Tibial artery (tissue), 4 donors: ENCODE measurements at regions of chr2 and their contacts with region 1.

Region 1: GRCh38 chr2:122486086-122486485 is 730.6 kb downstream of the TSN start:
- DNase-seq: no peak
- H3K4me3 ChIP-seq: no peak overlapping the region
- H3K27ac ChIP-seq: no peak overlapping the region
- H3K4me1 ChIP-seq: no peaks in the 10 kb centered on the region
- H3K27me3 ChIP-seq: no peaks in the 10 kb centered on the region
- CTCF ChIP-seq: no peak

Region 2: GRCh38 chr2:122433123-122433754 is 52.8 kb before region 1 on chr2:
- intact Hi-C with region 1: no loop called
- DNase-seq: no peak
- H3K4me3 ChIP-seq: no peak overlapping the region
- H3K27ac ChIP-seq: no peak overlapping the region
- H3K4me1 ChIP-seq: no peaks in the 10 kb centered on the region
- H3K27me3 ChIP-seq: no peaks in the 10 kb centered on the region
- CTCF ChIP-seq: no peak

Region 3: DNA sequence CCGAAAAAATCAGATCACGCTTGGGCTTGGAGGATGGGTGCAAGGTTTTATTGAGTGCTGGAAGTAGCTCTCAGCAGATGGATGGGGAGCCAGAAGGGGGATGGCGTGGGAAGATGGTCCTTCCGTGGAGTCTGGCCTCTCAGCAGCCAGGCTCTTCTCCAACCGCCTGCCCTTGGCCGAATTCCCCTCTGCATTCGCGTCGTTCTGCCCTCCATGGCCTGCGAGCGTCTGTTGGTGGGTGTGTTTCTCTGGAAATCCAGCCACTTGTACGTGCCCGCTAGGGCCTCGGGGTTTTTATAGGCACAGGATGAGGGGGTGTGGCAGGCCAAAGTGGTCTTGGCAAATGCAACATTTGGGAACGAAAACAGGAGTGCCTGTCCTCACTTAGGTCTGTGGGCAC is 84.6 kb after region 1 on chr2:
- intact Hi-C with region 1: no loop called
- DNase-seq: no peak
- H3K4me3 ChIP-seq: no peak overlapping the region
- H3K27ac ChIP-seq: no peak overlapping the region
- H3K4me1 ChIP-seq: no peaks in the 10 kb centered on the region
- H3K27me3 ChIP-seq: no peaks in the 10 kb centered on the region
- CTCF ChIP-seq: no peak

Region 4: GRCh38 chr2:122939796-122940195 is 453.7 kb after region 1 on chr2:
- intact Hi-C with region 1: loop called (anchors 5 kb)
- DNase-seq: no peak
- H3K4me3 ChIP-seq: no peak overlapping the region
- H3K27ac ChIP-seq: no peak overlapping the region
- H3K4me1 ChIP-seq: no peaks in the 10 kb centered on the region
- H3K27me3 ChIP-seq: no peaks in the 10 kb centered on the region
- CTCF ChIP-seq: no peak